Ovary (tissue), 10 donors: ENCODE measurements at regions of chr7 and their contacts with region 1.

Region 1: DNA sequence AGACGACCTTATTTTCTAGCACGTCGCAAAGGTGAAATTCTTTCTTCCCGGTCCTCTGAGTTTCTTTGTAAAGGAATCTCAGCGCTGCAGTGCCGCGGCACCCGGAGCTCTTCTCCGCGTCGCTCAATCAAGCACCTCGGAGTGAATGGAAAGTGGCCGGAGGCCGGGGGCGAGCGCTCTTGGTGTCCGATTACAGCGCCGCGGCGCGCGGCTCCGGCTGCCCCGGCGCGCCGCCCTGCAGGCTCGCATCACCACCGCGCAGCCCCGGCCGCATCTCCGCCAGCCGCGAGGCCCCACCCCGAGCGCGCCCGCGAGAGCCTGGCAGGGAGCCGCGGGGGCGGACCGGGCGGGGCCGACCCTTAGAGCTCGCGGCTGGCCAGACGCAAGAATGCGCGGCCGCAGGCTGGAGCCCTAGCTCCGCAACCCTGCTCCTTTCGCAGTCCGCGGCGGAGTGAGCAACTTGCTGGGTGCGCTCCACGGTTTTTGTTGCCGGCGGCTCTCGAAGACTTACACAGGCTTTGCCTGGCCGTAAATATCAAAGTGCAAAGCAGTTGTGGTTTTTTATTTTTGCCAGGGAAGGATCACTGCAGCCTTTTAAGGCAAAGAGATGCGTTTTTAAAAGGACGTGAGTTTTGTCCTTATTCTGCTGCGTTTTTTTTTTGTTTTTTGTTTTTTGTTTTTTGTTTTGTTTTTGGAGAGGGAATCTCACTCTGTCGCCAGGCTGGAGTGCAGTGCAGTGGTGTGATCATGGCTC is at the start of gene SEMA3C:
- DNase-seq: peak; percentile 89 to 96 (median 92)
- H3K4me3 ChIP-seq: peak within 1 kb of the TSS; percentile 63
- H3K27ac ChIP-seq: peak within 1 kb of the TSS; percentile 9 to 31
- H3K4me1 ChIP-seq: no peaks in the 10 kb centered on the region
- H3K27me3 ChIP-seq: no peaks in the 10 kb centered on the region
- CTCF ChIP-seq: no peak
- EP300 ChIP-seq: no peak
- POLR2A ChIP-seq: peak; percentile 26
- total RNA-seq, gene SEMA3C: 20.1 to 91.9 (median 56.5) TPM

Region 2: DNA sequence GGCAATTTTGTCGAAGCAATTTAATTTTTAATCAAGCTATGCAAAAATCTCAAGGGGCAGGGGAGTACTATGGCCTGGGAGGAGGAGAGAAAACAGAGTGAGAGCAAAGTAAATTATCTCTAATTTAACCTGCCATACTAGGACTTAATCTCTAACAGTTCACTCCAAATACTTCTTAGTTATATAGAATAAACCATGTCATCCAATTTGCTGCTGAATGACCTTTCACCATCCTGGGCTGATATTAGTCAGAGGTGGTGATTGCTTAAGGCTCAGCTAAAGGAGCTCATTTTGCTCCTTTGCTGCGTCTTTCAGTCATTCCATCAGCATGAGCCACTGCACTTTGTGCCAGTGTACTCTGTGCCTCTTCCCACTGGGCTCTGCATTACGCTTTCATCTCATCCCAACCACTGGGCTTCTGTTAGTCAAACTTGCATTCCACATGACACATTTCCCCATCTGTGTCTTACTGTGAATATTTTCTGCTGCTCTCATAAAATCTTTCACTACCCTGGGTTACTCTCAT is 196.4 kb before region 1 on chr7:
- intact Hi-C with region 1: loop called in 1 of 4 experiments (anchors 10 kb)
- DNase-seq: peak in 3 of 5 donors; percentile 25 to 39 (median 33)
- H3K4me3 ChIP-seq: no peak overlapping the region
- H3K27ac ChIP-seq: no peak overlapping the region
- H3K4me1 ChIP-seq: peaks cover 2% of the 10 kb centered on the region
- H3K27me3 ChIP-seq: no peaks in the 10 kb centered on the region
- CTCF ChIP-seq: no peak
- EP300 ChIP-seq: no peak
- POLR2A ChIP-seq: no peak

Region 3: DNA sequence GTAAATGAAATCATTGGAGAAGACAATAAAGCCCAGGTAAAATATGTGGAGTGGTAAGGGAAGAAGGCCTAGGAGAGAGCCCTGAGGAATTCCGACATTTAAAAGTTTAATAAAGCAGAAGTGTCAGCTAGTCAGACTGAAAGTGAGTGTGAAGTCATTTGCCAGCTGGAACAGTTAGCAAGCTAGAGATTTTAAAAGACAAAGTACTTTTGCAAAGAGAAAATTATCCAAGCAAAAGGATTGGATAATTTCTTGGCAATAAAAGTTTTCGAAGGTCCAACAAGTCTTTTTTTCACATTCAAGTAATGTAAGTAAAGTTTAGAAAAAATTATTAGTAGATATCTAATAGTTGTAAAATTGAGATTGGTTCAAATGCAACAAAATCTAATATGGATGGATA is 26.9 kb after region 1 on chr7:
- intact Hi-C with region 1: loop called in 1 of 4 experiments (anchors 2 kb)
- DNase-seq: no peak
- H3K4me3 ChIP-seq: no peak overlapping the region
- H3K27ac ChIP-seq: no peak overlapping the region
- H3K4me1 ChIP-seq: peaks cover 3% of the 10 kb centered on the region
- H3K27me3 ChIP-seq: no peaks in the 10 kb centered on the region
- CTCF ChIP-seq: no peak
- EP300 ChIP-seq: no peak
- POLR2A ChIP-seq: no peak

Region 4: DNA sequence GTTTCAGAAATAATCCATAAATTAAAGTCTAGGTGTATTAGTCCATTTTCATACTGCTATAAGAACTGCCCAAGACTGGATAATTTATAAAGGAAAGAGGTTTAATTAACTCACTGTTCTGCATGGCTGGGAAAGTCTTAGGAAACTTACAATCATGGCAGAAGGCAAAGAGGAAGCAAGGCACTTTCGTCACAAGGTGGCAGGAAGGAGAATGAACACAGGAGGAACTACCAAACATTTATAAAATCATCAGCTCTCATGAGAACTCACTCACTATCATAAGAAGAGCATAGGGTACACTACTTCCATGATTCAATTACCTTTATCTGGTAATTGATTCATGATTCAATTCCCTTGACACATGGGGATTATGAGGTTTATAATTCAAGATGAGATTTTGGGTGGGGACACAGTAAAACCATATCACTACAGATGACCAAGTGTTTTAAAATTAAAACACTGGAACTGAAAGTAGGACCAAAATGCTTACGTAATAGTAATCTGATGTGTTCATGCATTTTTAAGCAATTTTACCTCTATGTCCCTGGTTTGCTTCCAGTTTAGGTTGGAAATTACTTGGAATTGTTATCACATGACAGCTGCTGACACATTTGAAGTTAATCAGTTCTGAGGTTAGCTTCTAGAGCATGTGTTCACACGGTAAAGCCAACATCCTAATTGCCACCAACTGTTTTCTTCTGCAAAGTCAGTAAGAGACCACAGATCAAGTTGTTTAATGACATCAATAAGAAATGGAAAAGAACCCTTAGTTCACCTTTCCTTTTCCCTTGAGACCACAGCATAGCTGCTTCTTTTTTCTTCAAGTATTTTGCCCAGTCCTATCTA is 48.2 kb after region 1 on chr7:
- intact Hi-C with region 1: no loop called
- DNase-seq: no peak
- H3K4me3 ChIP-seq: no peak overlapping the region
- H3K27ac ChIP-seq: no peak overlapping the region
- H3K4me1 ChIP-seq: no peaks in the 10 kb centered on the region
- H3K27me3 ChIP-seq: no peaks in the 10 kb centered on the region
- CTCF ChIP-seq: no peak
- EP300 ChIP-seq: no peak
- POLR2A ChIP-seq: no peak